A549 (cell line): ENCODE measurements at regions of chr19 and their contacts with region 1.

Region 1: GRCh38 chr19:4576016-4576933 is 16.8 kb upstream of the SEMA6B start:
- DNase-seq: peak; percentile 72
- ATAC-seq: peak; percentile 49 to 71; a peak in 5 of 6 replicates
- H3K4me3 ChIP-seq: no peak overlapping the region
- H3K27ac ChIP-seq: peak overlapping the region; percentile 85 to 99
- H3K4me1 ChIP-seq: peaks cover 36% of the 10 kb centered on the region
- CTCF ChIP-seq: peak; percentile 63
- EP300 ChIP-seq: no peak
- POLR2A ChIP-seq: no peak
- RAD21 ChIP-seq: peak; percentile 48 to 50; a peak in 4 of 5 replicates

Region 2: GRCh38 chr19:4464815-4465581 is 111.3 kb before region 1 on chr19:
- CTCF ChIA-PET with region 1: no interaction called
- POLR2A ChIA-PET with region 1: no interaction called
- DNase-seq: no peak
- ATAC-seq: no peak
- H3K4me3 ChIP-seq: no peak overlapping the region
- H3K27ac ChIP-seq: no peak overlapping the region
- H3K4me1 ChIP-seq: no peaks in the 10 kb centered on the region
- CTCF ChIP-seq: no peak
- EP300 ChIP-seq: no peak
- POLR2A ChIP-seq: no peak
- RAD21 ChIP-seq: no peak

Region 3: GRCh38 chr19:4589579-4590410 is 13.5 kb after region 1 on chr19:
- CTCF ChIA-PET with region 1: interaction called, 24 read pairs
- POLR2A ChIA-PET with region 1: no interaction called
- DNase-seq: no peak
- ATAC-seq: peak; percentile 79 to 80; a peak in 5 of 6 replicates
- H3K4me3 ChIP-seq: no peak overlapping the region
- H3K27ac ChIP-seq: no peak overlapping the region
- H3K4me1 ChIP-seq: peaks cover 2% of the 10 kb centered on the region
- CTCF ChIP-seq: peak; percentile 38; the same call in 2 of the 3 replicates
- EP300 ChIP-seq: no peak
- POLR2A ChIP-seq: no peak
- RAD21 ChIP-seq: peak; percentile 12 to 21; a peak in 1 of 5 replicates

Region 4: GRCh38 chr19:4624733-4625362 is 48.6 kb after region 1 on chr19:
- CTCF ChIA-PET with region 1: interaction called, 15 read pairs
- POLR2A ChIA-PET with region 1: no interaction called
- DNase-seq: peak; percentile 36 to 79
- ATAC-seq: peak; percentile 75 to 78; a peak in 4 of 6 replicates
- H3K4me3 ChIP-seq: no peak overlapping the region
- H3K27ac ChIP-seq: peak overlapping the region; percentile 40 to 71; a peak in 4 of 6 replicates
- H3K4me1 ChIP-seq: peaks cover 22% of the 10 kb centered on the region; the same call in 2 of the 3 replicates
- CTCF ChIP-seq: peak; percentile 33
- EP300 ChIP-seq: no peak
- POLR2A ChIP-seq: no peak
- RAD21 ChIP-seq: peak in 1 of 2 experiments; percentile 16; a peak in 1 of 5 replicates

Region 5: DNA sequence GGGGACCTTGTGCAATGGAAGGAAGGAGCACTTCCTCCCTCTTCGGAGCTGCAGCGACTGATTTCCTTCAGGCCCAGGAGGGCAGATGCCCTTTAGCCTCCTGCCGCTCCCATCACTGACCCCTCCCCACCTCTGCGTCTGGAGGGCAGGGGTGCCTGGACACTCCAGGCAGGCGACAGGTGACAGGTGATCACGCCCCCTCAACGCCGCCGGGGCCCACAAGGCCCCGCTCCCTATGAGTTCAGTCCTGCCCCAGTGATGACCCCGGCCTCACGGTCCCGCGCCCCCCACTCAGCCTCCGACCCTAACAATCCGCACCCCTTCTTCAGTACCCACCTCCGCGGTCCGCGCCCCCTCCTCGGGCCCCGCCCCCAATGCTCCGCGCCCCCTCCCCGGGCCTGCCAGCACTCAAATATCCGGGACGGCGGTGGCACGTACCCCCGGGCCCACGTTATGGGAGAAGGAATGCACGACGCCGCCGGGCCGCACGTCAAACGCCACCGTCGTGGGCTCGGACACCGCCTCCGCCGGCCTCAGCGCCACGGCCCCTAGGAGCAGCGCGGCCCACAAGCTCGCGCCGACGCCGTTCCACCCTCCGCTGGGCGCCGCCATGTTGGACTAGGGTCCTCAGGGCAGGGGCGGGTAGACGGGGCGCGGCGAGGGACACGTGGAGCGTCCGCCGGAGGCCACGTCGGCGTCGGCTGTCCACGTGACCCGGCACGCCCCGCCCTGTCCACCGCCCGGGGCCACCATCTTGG is 93.6 kb after region 1 on chr19 and contains the start of gene MYDGF:
- CTCF ChIA-PET with region 1: no interaction called
- POLR2A ChIA-PET with region 1: no interaction called
- DNase-seq: peak; percentile 81 to 89
- ATAC-seq: peak; percentile 95 to 96
- H3K4me3 ChIP-seq: peak within 1 kb of the TSS; percentile 98
- H3K27ac ChIP-seq: peak within 1 kb of the TSS; percentile 96 to 100
- H3K4me1 ChIP-seq: peaks cover 21% of the 10 kb centered on the region
- CTCF ChIP-seq: no peak
- EP300 ChIP-seq: no peak
- POLR2A ChIP-seq: peak; percentile 80
- RAD21 ChIP-seq: no peak
- polyA plus RNA-seq, gene MYDGF: 62.1 and 63.3 TPM in 2 replicates